ENCODE measurements at regions of chrX and their contacts with region 1.

Region 1: DNA sequence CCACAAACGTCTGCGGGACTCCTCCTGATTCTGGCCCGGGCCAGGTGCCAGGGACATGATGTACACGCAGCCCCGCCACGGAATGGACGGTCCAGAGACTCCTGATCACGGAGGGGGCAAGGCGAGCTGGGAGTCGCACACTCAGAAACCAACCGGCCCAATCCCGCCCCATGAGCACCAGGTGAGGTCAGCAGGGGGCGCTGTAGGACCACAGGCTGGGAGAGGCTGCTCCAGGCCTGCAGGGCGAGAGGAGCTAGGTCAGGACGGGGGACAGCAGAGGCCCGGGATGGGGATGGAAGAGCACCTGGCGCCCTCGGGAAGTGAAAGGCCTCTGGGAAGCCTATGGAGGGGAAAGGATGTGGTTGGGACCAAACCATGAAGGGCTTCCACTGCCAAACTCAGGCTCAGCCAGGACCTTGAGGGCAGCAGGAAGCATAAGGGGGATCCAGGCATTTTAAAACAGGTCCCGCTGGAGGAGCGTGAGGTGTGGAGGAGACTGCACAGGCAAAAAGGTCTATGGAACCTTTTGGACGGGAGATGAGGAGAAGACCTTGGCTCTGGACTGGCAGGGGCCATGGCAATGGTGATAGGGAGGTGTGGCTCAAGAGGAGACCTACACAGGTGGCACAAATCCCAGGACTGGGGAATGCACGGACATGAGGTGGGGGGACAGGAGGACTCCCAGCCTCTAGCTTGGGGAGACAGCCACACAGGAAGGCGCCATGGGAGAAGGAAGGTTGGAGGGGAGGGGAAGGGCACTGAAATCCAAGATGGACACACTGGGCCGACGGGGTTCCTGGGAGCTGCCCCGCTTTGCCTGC is 79.2 kb downstream of the MTMR1 start:
- DNase-seq: peak; percentile 70 to 86 (median 74)
- H3K4me3 ChIP-seq: no peak overlapping the region
- H3K27ac ChIP-seq: peak overlapping the region in 3 of 59 donors; percentile 8 to 36 (median 11)
- H3K27me3 ChIP-seq: peaks cover 0 to 70% (median 7%) of the 10 kb centered on the region in 45 donors
- CTCF ChIP-seq: peak; percentile 42 to 87 (median 74)

Region 2: GRCh38 chrX:150719621-150720020 is 52.7 kb before region 1 on chrX:
- intact Hi-C with region 1: no loop called
- DNase-seq: no peak
- H3K4me3 ChIP-seq: no peak overlapping the region
- H3K27ac ChIP-seq: no peak overlapping the region
- H3K27me3 ChIP-seq: peaks cover 0 to 20% (median under 1%) of the 10 kb centered on the region in 45 donors
- CTCF ChIP-seq: no peak

Region 3: GRCh38 chrX:151004082-151004481 is 231.7 kb after region 1 on chrX:
- intact Hi-C with region 1: loop called (anchors 5 to 10 kb)
- DNase-seq: no peak
- H3K4me3 ChIP-seq: no peak overlapping the region
- H3K27ac ChIP-seq: no peak overlapping the region
- H3K27me3 ChIP-seq: peaks cover 0 to 57% (median 11%) of the 10 kb centered on the region in 45 donors
- CTCF ChIP-seq: peak in 29 of 56 donors; percentile 11 to 49 (median 32)

Region 4: DNA sequence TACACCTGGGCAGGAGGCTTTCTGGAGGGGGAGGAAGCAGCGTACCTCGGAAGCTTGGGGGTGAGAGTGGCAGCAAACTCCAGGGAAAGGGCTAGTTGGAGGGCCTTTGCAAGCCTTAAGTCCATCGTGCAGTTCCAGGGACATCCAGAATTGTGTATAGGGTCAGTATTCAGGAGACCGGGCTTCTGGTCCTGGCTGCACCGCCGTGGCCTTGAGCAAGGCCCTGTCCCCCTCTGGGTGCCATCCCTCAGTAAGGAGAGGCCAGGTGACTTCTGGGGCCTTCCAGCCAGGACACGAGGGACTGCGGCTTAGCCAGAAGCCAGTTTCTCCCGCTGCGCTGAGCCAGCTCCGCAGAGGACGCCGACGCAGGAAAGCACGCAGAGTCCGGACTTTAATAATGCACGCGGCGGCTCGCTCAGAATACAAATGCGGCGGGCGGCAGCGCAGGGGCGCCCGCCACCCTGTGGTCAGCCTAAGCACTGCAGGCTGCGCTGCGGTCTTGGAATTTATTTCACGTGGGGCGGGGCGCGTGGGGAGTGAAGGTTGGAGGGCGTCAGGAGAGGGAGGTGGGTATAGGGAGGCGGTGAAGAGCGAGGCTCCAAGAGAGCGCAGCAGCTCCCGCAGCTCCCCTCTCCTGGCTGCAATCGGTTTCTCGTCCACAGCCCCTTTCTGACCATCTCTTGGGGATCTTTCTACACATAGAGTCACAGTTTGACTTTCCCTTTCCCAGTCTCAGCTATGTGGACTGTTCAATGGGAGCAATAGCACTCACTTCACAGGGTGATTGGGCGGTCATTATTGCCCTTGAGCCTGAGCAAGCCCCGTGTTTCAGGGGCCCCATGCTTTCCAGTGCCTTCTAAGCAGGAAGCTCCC is 310.0 kb after region 1 on chrX:
- intact Hi-C with region 1: loop called (anchors 1 to 2 kb)
- DNase-seq: peak; percentile 43 to 72 (median 60)
- H3K4me3 ChIP-seq: peak overlapping the region in 54 of 59 donors; percentile 3 to 58 (median 34)
- H3K27ac ChIP-seq: peak overlapping the region in 9 of 59 donors; percentile 10 to 56 (median 27)
- H3K27me3 ChIP-seq: peaks cover 0 to 66% (median 16%) of the 10 kb centered on the region in 45 donors
- CTCF ChIP-seq: peak; percentile 70 to 93 (median 83)